ENCODE measurements at regions of chr1 and their contacts with region 1.

Region 1: DNA sequence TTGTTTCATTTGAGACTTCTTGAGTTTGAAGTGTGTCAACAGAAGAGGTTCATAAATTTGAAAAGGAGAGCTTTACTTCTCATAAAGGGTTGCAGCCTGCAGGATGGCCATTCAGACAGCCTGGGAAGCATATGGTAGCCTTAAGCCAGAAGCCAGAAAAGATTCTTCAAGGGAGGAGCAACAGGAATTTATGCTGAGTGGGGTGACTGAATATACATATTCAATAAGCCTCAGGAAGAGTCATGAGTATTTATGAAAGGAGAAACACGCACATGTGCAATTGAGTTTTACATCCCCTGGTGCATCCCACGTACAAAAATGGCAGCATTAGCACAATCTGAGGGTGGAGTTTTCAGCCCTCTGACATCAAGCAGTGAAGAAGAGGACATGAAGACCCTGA is 290.2 kb downstream of the KCTD3 start:
- DNase-seq: no peak
- ATAC-seq: no peak
- H3K4me3 ChIP-seq: no peak overlapping the region
- H3K27ac ChIP-seq: no peak overlapping the region
- H3K4me1 ChIP-seq: no peaks in the 10 kb centered on the region
- H3K27me3 ChIP-seq: peaks cover 3% of the 10 kb centered on the region; the same call in 1 of the 2 replicates
- CTCF ChIP-seq: no peak

Region 2: DNA sequence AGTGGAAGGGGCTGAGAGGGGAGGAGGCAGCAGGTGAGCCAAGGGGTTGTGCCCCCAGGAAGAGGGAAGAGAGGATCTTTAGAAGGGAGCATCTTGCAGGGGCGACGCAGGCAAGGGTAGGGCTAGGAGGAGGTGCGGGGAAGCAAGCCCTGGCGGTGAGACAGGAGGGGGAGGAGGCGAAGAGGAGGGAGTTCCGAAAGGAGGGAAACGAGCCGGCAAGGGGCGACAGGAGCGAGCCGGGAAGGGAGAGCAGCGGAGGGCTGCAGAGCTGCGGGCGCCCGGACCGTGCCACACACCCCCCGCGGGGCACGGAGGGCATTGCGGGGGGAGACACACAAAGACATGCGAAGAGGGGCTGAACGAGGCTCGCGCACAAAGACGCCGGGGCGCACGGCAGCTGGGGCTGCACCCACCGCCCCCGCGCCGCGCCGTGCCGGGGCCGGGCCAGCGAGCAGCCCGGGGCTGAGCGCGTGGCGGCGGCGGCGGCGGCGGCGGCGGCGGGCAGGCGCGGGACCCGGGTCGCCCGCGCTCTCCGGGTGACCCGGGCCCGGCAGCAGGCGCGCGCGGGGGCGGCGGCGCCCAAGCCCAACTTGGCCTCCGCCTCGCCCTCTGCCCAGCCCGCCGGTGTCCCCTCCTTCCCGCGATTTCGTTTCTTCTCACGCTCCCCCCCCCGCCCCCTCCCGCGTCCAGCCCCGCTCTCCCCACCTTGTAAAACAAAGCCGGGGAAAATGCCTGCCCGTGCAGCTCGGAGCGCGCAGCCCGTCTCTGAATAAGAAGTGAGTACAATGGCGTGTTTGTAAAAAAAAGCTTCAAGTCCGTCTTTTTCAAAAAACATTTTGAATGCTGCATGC is 774.6 kb before region 1 on chr1 and contains the start of gene KCNK2:
- CTCF ChIA-PET with region 1: no interaction called
- POLR2A ChIA-PET with region 1: interaction called, 10 read pairs
- intact Hi-C with region 1: no loop called
- DNase-seq: peak; percentile 28
- ATAC-seq: peak; percentile 62
- H3K4me3 ChIP-seq: peak within 1 kb of the TSS; percentile 67
- H3K27ac ChIP-seq: no peak within 1 kb of the TSS
- H3K4me1 ChIP-seq: peaks cover 9% of the 10 kb centered on the region; the same call in 1 of the 2 replicates
- H3K27me3 ChIP-seq: peaks cover 51% of the 10 kb centered on the region
- CTCF ChIP-seq: no peak
- total RNA-seq, gene KCNK2: not detected in 2 replicates

Region 3: DNA sequence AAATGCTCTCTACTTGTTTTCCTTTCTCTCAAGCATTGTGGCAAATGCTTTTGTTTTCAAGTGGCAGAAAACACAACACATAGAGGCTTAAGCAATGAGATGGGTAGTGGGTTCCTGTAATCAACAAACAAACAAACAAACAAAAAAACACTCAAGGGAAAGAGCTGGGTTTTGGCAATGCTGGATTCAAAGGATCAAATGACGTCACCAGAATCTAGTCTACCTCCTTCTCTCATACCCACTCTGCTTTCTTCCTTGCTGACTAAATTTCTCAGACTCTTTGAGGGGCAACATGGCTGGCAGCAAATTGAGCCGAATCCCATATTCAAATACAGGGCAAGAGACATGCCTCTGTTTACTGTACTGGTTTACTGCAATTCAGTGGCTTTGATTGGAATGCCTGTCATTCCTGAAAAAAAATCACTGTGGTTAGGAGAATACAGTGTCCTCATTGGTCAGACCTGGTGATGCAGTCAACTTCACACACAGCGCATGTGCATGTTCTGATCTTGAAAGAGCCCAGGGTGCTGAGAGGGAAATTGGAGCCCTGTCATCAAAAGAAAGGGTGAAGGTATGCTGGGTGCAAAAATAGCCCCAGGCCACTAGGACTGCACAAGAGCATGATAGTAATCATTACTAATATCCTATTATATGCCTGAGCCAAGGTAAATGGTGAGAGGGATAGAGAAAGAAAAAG is 66.0 kb after region 1 on chr1:
- CTCF ChIA-PET with region 1: no interaction called
- POLR2A ChIA-PET with region 1: no interaction called
- intact Hi-C with region 1: no loop called
- DNase-seq: peak; percentile 41
- ATAC-seq: peak; percentile 15; the same call in 1 of the 2 replicates
- H3K4me3 ChIP-seq: no peak overlapping the region
- H3K27ac ChIP-seq: no peak overlapping the region
- H3K4me1 ChIP-seq: no peaks in the 10 kb centered on the region
- H3K27me3 ChIP-seq: peaks cover 50% of the 10 kb centered on the region
- CTCF ChIP-seq: no peak

Measured in PC-3 (cell line).